ENCODE measurements at regions of chr22 and their contacts with region 1.

Region 1: DNA sequence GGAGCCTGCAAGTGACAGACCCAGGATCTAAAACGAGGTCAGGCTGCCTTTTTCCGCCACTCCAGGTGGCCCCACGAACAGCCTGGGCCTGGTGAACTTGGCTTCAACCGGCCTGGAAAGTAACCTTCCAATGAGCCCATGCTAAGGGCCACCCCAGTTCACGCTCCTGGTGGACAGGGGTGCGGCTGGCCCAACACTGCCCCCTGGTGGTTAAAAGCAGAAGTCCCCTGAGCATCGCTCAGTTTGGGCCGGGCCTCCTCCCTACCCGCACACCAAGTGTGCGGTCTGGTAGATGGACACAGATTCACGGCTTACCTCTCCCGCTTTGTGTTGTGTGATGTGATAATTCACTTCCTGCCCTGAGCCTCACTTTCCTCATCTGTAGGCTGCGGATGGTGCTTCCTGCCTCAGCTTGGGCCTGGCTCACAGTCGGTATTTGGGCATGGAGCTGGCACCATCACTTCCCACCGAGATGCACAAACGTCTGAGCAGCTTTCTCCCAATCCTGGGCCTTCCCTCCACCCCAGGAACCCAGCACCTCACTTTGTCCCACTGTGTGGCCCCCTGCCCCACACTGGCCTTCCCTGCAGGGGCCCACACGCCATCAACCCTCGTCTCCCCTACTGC is 13.7 kb upstream of the SEC14L3 start:
- DNase-seq: peak; percentile 74 to 82
- H3K4me3 ChIP-seq: no peak overlapping the region
- H3K27ac ChIP-seq: no peak overlapping the region
- H3K4me1 ChIP-seq: peaks cover 0 to 20% (median 12%) of the 10 kb centered on the region in 4 donors
- H3K27me3 ChIP-seq: peaks cover 0 to 7% (median 0%) of the 10 kb centered on the region in 3 donors
- CTCF ChIP-seq: peak in 6 of 7 experiments; percentile 16 to 96 (median 88)
- EP300 ChIP-seq: no peak
- POLR2A ChIP-seq: no peak

Region 2: DNA sequence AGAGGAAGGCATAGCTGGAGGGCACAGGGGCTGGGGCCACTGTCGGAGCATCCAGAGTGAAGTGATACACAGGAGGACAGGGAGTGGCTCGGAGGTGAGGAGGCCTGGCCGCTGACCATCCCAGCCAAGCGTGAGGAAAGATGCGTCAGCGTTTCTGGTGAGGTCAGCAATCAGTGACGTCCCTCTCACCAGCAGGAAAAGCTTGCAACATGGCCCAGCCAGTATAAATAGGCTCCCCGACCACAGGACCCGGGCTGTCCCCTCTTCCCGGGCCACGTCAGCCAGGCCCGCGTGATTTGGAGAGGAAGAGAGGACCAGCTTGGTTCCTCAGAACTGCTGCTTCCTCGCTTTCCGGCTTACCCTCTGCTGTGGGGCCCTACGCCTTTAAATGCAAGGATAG is 214.6 kb before region 1 on chr22:
- intact Hi-C with region 1: loop called (anchors 5 kb)
- DNase-seq: peak; percentile 59 to 65
- H3K4me3 ChIP-seq: no peak overlapping the region
- H3K27ac ChIP-seq: peak overlapping the region in 3 of 5 donors; percentile 22 to 63 (median 62)
- H3K4me1 ChIP-seq: peaks cover 0 to 15% (median 1%) of the 10 kb centered on the region in 4 donors
- H3K27me3 ChIP-seq: no peaks in the 10 kb centered on the region
- CTCF ChIP-seq: no peak
- EP300 ChIP-seq: no peak
- POLR2A ChIP-seq: no peak

Region 3: DNA sequence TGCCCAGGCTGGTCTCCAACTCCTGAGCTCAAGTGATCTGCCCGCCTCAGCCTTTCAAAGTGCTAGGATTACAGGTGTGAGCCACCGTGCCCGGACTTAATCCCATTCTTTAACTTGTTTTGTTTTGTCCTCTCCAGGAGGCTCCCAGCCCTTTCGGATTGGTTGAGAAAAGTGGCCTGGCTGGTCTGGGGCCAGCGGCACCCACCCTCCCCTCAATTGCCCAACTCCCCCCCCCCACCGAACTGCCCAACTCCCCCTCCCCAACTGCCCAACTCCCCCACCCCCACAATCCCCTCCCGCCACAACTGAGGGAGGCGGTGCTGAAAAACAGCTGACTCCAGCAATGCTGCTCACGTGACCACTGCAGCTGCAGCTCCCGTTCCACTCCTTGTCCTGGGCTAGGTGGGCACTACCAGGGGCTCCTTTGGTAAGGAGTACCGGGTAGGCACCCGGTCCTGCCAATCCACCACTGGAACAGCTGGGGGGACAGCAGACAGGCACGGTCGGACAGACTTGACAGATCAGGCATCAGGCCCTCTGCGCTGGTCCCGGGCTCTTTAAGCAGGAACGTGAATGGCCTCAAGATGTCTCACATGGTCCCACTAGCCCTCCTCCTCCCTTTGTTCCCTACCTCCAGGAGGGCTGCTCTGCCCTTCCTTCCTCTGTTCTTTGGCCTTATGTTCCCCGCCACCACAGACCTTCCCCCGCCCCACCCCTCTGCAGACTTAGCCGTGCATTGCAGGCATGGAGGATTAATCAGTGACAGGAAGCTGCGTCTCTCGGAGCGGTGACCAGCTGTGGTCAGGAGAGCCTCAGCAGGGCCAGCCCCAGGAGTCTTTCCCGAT is 121.2 kb after region 1 on chr22 and contains the start of gene TCN2:
- intact Hi-C with region 1: no loop called
- DNase-seq: peak; percentile 74 to 91
- H3K4me3 ChIP-seq: peak within 1 kb of the TSS; percentile 47 to 65 (median 64)
- H3K27ac ChIP-seq: peak within 1 kb of the TSS; percentile 60 to 88 (median 79)
- H3K4me1 ChIP-seq: peaks cover 30 to 70% (median 50%) of the 10 kb centered on the region in 4 donors
- H3K27me3 ChIP-seq: no peaks in the 10 kb centered on the region
- CTCF ChIP-seq: peak in 2 of 7 experiments; percentile 9 to 23
- EP300 ChIP-seq: no peak
- POLR2A ChIP-seq: no peak
- total RNA-seq, gene TCN2: 1.4 to 16.3 (median 2.3) TPM